G401 (cell line): ENCODE measurements at regions of chr17 and their contacts with region 1.

Region 1: DNA sequence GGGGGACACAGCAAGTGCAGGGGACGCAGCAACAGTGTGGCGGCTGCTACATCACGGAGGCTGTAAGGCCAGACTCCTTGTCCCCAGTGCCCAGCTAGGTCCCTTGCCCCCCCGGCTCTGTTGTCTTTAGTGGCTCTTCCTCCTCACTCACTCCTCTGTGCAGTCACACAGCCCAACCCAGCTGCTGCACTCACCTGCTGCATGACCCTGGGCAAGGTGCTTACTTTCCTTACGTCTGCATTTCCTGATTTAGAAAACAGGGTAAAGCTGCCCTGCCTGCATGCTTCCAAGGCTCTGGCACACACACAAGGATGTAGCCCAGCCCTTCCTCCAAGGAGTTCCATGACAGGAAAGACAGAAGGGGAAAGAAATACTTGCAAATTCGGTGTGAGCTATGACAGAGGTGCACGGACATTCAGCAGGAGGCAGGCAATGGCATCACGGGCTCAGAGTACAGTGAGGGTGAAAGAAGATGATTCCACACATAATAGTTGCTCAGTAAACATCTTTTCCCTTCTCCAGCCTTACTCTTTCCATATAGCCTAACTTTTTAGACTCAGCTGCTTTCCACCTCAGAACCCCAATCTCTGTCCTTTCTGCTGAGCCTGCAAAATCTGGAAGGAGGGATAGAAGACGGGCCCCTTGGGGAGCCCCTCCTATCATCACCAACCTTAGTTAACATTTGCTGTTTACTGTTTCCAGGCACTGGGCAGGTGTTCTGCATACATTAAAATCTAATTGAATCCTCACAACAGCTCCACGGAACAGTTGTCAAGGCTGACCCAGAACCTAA is 150.9 kb downstream of the MRM1 start:
- DNase-seq: no peak

Region 2: DNA sequence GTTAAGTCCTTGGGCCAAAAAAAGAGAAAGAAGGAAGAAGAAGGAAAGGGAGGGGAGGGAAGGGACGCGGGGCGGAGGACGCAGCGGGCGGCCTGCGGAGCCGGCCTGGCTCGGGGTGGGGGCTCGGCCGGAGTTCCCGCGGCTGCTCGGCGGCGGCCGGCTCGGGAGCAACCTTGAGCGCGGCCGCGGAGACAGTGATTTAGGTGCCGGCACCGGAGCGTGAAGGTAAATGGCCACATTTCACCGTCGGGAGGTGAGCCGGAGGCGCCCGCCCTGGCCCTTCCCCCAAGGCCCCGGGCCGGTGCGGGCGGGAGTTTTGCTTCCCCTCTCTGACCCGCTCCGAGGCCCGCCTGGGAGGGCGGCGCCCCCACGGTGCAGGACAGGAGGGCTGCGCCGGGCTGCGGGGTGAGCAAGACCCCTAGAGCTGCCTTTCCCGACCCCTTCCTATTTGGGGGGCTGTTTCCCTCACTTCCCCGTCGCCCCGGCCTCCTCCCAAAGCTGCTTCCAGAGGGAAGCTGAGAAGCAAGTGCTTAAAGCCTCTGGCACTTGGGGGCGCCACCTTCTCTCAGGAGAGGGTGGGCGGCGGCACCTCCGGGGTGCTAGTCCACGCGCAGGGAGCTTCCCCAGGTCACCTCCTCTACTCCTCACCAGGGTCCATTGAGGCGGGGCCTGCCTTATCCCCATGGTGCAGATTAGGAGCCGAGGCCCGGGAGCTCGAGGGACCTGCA is 94.4 kb before region 1 on chr17:
- in situ Hi-C with region 1: loop called (anchors 5 kb)
- DNase-seq: peak; percentile 30